Ovary (tissue), 10 donors: ENCODE measurements at regions of chr2 and their contacts with region 1.

Region 1: DNA sequence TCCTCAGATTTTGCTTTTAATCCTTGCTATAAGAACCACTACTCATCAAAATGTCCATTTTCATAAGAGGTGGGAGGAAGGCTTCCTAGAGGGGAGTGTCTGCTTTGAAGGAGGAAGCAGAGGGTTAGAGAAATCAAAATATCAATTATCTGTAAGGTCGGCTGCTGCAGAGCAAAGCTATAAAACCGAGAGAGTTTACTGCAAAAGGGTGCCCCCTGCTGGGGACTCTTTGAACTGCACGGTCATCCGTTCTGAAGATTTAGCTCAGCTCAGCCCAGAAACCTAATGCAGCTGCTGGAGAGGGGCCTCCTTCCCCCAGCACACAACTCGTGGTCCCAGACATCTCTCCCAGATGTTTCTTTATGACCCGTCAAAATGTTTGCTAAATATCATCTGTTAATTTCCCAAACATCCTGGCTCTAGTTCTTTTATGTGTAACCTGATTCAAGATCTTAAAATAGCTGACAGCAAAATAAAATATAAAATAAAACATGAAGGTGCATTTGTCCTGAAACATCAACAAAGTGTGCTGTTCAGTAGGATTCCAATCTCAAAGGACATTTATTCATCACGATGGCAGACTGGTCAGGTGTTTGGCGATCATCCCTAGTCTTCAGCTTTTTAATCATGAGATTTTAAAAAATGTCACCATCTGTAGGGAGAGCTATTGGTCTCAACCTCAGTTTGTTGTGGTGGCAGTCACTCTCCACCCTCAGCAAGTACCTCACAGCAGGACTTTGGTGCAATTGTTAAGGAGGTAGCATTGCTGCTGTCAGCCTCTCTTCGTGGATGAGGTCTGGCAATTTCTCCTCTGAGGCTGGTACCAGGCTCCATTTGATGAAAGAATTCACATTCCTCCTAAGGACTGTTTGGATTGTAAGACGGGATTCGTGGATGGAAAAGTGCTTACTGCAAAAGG is 185.9 kb downstream of the MTX2 start:
- DNase-seq: peak; percentile 76 to 92 (median 89)
- H3K4me3 ChIP-seq: no peak overlapping the region
- H3K27ac ChIP-seq: no peak overlapping the region
- H3K4me1 ChIP-seq: peaks cover 2% of the 10 kb centered on the region
- H3K27me3 ChIP-seq: no peaks in the 10 kb centered on the region
- CTCF ChIP-seq: peak; percentile 68 to 87 (median 82)
- EP300 ChIP-seq: no peak
- POLR2A ChIP-seq: no peak

Region 2: DNA sequence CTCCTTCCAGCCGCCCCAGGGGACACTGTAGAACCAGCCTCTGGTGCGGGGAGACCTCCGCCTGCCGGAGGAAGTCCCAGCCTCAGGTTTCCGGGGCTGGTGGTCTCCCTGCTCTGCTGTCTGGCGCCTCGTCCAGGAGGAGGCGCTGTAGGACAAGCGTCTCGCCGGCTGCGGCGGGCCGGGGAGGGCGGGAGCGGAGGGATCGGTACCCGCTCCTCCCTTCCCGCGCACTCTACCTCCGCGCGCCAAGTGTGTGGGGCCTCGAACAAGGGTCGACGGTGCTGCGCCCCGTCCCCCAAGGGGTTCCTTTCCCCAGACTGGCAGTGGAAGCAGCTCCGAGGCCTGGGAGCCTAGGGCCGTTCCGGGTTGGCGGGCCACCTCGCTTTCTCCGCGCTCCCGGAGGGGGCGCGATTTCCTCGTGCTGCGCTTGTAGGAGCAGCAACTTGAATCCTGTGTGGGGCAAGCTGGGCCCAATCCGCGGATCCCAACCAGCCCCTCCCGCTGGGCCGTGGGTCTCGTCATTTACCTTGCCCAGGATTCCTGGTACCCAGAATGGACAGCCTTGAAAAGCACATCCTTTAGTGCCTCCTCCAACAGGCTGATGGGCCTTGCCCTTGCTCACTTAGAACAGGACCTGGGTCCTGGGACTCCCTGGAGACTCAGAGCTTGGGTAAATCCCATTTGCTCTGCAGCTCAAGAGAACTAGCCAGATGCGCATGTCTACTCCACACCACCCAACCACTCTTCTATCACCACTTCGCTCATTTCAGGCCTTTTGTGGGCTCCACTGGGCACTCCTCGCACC is 314.4 kb before region 1 on chr2:
- intact Hi-C with region 1: loop called (anchors 2 to 5 kb)
- DNase-seq: peak; percentile 84 to 90 (median 90)
- H3K4me3 ChIP-seq: peak overlapping the region; percentile 53
- H3K27ac ChIP-seq: peak overlapping the region; percentile 80 to 99
- H3K4me1 ChIP-seq: peaks cover 9% of the 10 kb centered on the region
- H3K27me3 ChIP-seq: no peaks in the 10 kb centered on the region
- CTCF ChIP-seq: peak; percentile 98 to 99 (median 98)
- EP300 ChIP-seq: no peak
- POLR2A ChIP-seq: no peak

Region 3: GRCh38 chr2:176157499-176158185 is 297.5 kb before region 1 on chr2:
- intact Hi-C with region 1: loop called in 1 of 4 experiments (anchors 5 kb)
- DNase-seq: peak in 2 of 5 donors; percentile 16 to 27
- H3K4me3 ChIP-seq: peak overlapping the region; percentile 42
- H3K27ac ChIP-seq: no peak overlapping the region
- H3K4me1 ChIP-seq: no peaks in the 10 kb centered on the region
- H3K27me3 ChIP-seq: no peaks in the 10 kb centered on the region
- CTCF ChIP-seq: no peak
- EP300 ChIP-seq: no peak
- POLR2A ChIP-seq: no peak

Region 4: GRCh38 chr2:176554101-176555048 is 99.2 kb after region 1 on chr2:
- intact Hi-C with region 1: loop called (anchors 5 to 10 kb)
- DNase-seq: peak; percentile 34 to 67 (median 54)
- H3K4me3 ChIP-seq: peak overlapping the region; percentile 38
- H3K27ac ChIP-seq: peak overlapping the region; percentile 72 to 88
- H3K4me1 ChIP-seq: peaks cover 5% of the 10 kb centered on the region
- H3K27me3 ChIP-seq: no peaks in the 10 kb centered on the region
- CTCF ChIP-seq: peak; percentile 80 to 88 (median 88)
- EP300 ChIP-seq: no peak
- POLR2A ChIP-seq: no peak

Region 5: DNA sequence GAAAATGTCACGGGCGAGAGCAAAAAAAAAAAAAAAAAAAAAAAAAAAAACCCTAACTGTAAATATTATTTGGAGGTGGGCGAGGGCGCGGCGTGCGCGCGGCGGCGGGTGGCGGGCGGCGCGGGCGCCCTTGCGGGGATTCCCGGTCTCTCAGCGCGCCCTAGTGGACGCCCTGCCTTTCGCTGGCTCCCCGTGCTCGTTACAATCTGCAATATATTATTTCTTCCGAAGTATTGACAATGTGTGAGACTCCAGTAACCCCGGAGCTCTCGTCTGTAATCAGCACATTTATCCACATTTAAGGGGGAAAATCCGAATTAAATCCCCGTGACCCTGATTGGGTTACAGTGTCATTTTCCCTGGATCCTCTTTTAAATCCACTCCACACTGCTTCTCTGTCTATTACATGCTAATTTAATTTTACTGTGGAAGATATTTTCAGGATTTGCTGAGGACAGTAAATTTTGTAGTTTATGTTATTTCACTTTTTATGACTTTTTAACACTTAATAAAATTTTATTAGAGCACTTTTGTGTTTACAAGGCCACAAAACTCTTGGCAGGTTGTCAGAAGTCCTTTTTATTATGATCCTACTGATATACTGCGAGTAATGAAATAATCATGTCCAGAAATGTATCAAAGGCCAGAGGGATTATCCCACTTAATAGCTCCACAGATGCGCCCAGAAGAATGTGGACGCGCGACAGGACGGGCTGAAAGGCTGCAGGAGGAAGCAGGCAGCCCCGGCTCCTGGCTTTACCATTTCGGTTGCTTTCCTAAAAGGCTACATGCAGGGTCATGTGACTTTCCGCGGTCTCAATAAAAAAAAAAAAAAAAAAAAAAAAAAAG is 183.2 kb after region 1 on chr2:
- intact Hi-C with region 1: loop called in 2 of 4 experiments (anchors 5 to 10 kb)
- DNase-seq: peak; percentile 73 to 88 (median 83)
- H3K4me3 ChIP-seq: peak overlapping the region; percentile 59
- H3K27ac ChIP-seq: peak overlapping the region; percentile 78 to 88
- H3K4me1 ChIP-seq: no peaks in the 10 kb centered on the region
- H3K27me3 ChIP-seq: no peaks in the 10 kb centered on the region
- CTCF ChIP-seq: peak; percentile 61 to 83 (median 63)
- EP300 ChIP-seq: no peak
- POLR2A ChIP-seq: no peak

Region 6: DNA sequence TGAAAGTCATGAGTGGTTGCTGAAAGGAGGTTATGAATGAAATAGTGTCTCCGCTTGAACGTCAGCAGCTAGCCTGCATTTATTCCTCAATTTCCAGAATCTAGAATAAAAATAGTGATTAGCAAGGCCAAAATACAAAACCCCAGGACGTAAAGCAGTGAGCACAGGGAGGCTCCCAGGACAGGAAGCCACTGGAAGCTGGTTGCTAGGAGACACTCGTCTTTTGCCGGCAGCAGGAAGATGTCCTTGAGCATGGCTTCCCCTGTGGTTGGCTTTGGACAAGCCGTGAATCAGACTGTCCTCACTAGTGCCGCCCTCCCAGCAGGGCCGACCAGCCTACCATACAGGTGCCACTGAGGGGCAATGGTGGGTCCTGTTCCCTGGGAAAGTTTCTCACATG is 188.5 kb after region 1 on chr2:
- intact Hi-C with region 1: loop called in 2 of 4 experiments (anchors 5 to 10 kb)
- DNase-seq: peak; percentile 12 to 44 (median 32)
- H3K4me3 ChIP-seq: no peak overlapping the region
- H3K27ac ChIP-seq: no peak overlapping the region
- H3K4me1 ChIP-seq: peaks cover 2% of the 10 kb centered on the region
- H3K27me3 ChIP-seq: no peaks in the 10 kb centered on the region
- CTCF ChIP-seq: no peak
- EP300 ChIP-seq: no peak
- POLR2A ChIP-seq: no peak